PC-9 (cell line): ENCODE measurements at regions of chr2 and their contacts with region 1.

Region 1: GRCh38 chr2:56680971-56681631 is 497.3 kb downstream of the CCDC85A start:
- DNase-seq: no peak
- H3K4me3 ChIP-seq: no peak overlapping the region
- H3K27ac ChIP-seq: no peak overlapping the region
- H3K4me1 ChIP-seq: no peaks in the 10 kb centered on the region
- H3K27me3 ChIP-seq: no peaks in the 10 kb centered on the region
- CTCF ChIP-seq: no peak

Region 2: DNA sequence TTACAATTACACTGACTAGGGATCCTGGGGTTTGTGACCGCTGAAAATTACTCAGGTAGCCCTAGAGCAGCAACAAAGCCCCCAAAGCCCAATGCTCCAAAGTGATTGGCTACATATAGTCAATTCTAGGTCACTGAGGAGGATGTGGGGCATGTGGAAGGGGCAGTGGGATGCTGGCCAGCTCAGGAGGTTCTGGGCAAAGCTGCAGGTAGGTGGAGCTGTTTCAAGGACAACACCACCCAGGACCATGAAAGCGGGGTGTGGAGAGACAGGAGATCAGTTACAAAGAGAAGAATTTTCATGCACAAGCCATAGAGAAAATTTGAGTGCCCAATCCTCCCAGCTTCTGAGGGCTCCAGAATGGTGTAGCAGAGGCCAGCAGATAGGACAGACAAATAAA is 572.3 kb before region 1 on chr2:
- CTCF ChIA-PET with region 1: no interaction called
- POLR2A ChIA-PET with region 1: no interaction called
- intact Hi-C with region 1: no loop called
- DNase-seq: no peak
- H3K4me3 ChIP-seq: no peak overlapping the region
- H3K27ac ChIP-seq: no peak overlapping the region
- H3K4me1 ChIP-seq: no peaks in the 10 kb centered on the region
- H3K27me3 ChIP-seq: 0 out of 2 replicates have a peak, but pooled peaks cover 2% of the 10 kb centered on the region
- CTCF ChIP-seq: no peak

Region 3: DNA sequence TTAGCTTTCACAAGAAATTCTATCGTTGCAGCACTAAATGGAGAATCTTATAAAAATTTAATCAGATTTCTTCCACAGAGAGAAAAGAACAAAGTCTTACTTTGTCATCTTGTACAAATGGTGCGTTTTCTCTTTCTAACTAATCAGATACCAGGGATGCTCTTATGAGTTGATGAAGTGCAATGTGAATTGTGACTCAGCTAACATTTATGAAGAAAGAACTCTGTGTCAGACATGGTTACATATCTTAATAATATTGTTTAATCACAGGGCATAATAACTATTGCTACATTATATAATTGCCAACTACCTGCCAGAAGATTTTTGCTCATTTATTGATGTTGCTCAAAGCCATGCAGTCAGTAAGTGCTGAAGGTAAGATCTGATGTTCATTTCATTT is 32.3 kb before region 1 on chr2:
- CTCF ChIA-PET with region 1: no interaction called
- POLR2A ChIA-PET with region 1: no interaction called
- intact Hi-C with region 1: no loop called
- DNase-seq: no peak
- H3K4me3 ChIP-seq: no peak overlapping the region
- H3K27ac ChIP-seq: no peak overlapping the region
- H3K4me1 ChIP-seq: no peaks in the 10 kb centered on the region
- H3K27me3 ChIP-seq: no peaks in the 10 kb centered on the region
- CTCF ChIP-seq: no peak

Region 4: GRCh38 chr2:56741601-56742102 is 60.6 kb after region 1 on chr2:
- CTCF ChIA-PET with region 1: no interaction called
- POLR2A ChIA-PET with region 1: no interaction called
- intact Hi-C with region 1: loop called (anchors 1 kb)
- DNase-seq: peak; percentile 69 to 72
- H3K4me3 ChIP-seq: no peak overlapping the region
- H3K27ac ChIP-seq: no peak overlapping the region
- H3K4me1 ChIP-seq: peaks cover 16% of the 10 kb centered on the region
- H3K27me3 ChIP-seq: no peaks in the 10 kb centered on the region
- CTCF ChIP-seq: no peak